ENCODE measurements at regions of chr4 and their contacts with region 1.

Region 1: GRCh38 chr4:54498661-54499111 is 159.1 kb upstream of the KIT start:
- DNase-seq: peak; percentile 71
- H3K4me3 ChIP-seq: no peak overlapping the region
- H3K27ac ChIP-seq: no peak overlapping the region
- H3K4me1 ChIP-seq: peaks cover 13% of the 10 kb centered on the region
- H3K27me3 ChIP-seq: no peaks in the 10 kb centered on the region
- CTCF ChIP-seq: no peak

Region 2: DNA sequence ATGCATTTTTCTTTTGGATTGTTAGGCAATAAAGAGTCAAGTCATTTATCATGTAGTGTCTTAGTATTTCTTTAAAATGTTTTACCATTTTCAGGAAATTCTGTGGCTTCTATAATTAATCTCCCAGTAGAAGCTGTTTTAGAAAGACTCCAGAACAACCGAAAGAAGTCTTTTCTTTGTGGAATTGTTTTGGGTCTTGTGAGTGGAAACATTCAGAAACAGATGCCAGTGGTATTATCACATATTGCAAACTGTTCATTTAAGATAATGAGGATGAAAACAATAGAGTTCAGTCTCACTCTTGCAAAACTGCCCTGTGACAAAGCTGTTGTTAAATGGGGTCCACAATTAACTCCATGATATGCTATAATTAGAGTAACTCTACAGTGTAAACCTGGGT is 52.1 kb before region 1 on chr4:
- CTCF ChIA-PET with region 1: no interaction called
- dilution Hi-C with region 1: no loop called
- in situ Hi-C with region 1: no loop called
- intact Hi-C with region 1: no loop called
- DNase-seq: no peak
- H3K4me3 ChIP-seq: no peak overlapping the region
- H3K27ac ChIP-seq: no peak overlapping the region
- H3K4me1 ChIP-seq: no peaks in the 10 kb centered on the region
- H3K27me3 ChIP-seq: peaks cover 2% of the 10 kb centered on the region
- CTCF ChIP-seq: no peak

Region 3: DNA sequence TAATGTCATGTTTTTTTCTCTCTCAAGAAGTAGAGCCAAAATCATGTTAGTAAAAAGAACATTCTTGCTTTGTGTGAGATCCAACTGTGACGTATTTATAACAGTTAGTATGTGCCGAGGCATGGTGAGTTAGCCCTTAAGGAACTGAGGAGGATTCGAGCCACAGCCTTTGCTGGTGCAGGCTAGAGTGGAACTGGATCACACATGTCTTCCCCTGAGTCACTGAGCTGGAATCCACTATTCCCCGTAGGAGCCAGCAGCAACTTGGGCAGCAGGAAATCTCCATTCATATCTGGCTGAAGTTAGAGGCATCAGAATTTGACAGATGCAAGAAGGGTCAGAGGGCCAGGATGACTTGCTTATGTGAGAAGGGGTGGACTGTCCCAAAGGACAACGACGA is 14.5 kb after region 1 on chr4:
- CTCF ChIA-PET with region 1: no interaction called
- dilution Hi-C with region 1: no loop called
- in situ Hi-C with region 1: no loop called
- intact Hi-C with region 1: loop called (anchors 1 kb)
- DNase-seq: peak; percentile 84
- H3K4me3 ChIP-seq: no peak overlapping the region
- H3K27ac ChIP-seq: peak overlapping the region; percentile 44
- H3K4me1 ChIP-seq: peaks cover 23% of the 10 kb centered on the region
- H3K27me3 ChIP-seq: no peaks in the 10 kb centered on the region
- CTCF ChIP-seq: no peak

Measured in mammary epithelial cell (primary cell).